Activated CD4-positive, alpha-beta T cell treated with anti-CD3 and anti-CD28 coated beads for 36 hours (primary cell): ENCODE measurements at regions of chr13 and their contacts with region 1.

Region 1: DNA sequence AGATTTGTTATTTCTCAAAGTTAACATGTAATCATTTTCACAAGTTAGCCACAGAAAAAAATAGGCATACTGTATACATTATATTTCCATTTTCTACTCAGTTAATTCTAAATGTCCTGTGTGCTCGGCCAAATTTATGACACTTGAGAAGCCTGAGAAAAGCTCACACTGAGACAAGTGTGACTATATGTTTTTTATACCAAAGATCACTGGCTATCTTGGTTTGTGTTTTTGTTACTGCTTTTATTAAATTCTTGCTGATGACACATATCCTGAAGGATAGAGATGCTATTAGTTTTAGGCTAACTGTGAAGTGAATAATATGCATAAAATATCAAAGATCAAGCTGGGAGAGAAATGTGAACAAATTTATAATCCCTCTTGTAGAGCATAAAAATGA is 49.3 kb upstream of the IL17D start:
- DNase-seq: no peak
- ATAC-seq: no peak
- H3K4me3 Mint-ChIP-seq: no peak overlapping the region
- H3K27ac Mint-ChIP-seq: no peak overlapping the region
- H3K4me1 Mint-ChIP-seq: no peaks in the 10 kb centered on the region
- H3K27me3 Mint-ChIP-seq: no peaks in the 10 kb centered on the region

Region 2: GRCh38 chr13:20305587-20305986 is 348.6 kb before region 1 on chr13:
- CTCF ChIA-PET with region 1: no interaction called
- POLR2A ChIA-PET with region 1: no interaction called
- intact Hi-C with region 1: loop called in 1 of 2 experiments (anchors 5 kb)
- DNase-seq: no peak
- ATAC-seq: no peak
- H3K4me3 Mint-ChIP-seq: no peak overlapping the region
- H3K27ac Mint-ChIP-seq: no peak overlapping the region
- H3K4me1 Mint-ChIP-seq: peaks cover 3% of the 10 kb centered on the region
- H3K27me3 Mint-ChIP-seq: peaks cover 20% of the 10 kb centered on the region

Region 3: DNA sequence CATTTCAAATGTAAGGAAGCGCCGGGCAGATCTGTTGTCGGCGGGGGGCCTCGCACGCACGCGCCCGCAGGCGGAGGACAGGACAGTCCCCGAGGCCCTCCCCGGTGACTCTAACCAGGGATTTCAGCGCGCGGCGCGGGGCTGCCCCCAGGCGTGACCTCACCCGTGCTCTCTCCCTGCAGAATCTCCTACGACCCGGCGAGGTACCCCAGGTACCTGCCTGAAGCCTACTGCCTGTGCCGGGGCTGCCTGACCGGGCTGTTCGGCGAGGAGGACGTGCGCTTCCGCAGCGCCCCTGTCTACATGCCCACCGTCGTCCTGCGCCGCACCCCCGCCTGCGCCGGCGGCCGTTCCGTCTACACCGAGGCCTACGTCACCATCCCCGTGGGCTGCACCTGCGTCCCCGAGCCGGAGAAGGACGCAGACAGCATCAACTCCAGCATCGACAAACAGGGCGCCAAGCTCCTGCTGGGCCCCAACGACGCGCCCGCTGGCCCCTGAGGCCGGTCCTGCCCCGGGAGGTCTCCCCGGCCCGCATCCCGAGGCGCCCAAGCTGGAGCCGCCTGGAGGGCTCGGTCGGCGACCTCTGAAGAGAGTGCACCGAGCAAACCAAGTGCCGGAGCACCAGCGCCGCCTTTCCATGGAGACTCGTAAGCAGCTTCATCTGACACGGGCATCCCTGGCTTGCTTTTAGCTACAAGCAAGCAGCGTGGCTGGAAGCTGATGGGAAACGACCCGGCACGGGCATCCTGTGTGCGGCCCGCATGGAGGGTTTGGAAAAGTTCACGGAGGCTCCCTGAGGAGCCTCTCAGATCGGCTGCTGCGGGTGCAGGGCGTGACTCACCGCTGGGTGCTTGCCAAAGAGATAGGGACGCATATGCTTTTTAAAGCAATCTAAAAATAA is 67.5 kb after region 1 on chr13:
- CTCF ChIA-PET with region 1: no interaction called
- POLR2A ChIA-PET with region 1: no interaction called
- intact Hi-C with region 1: no loop called
- DNase-seq: peak; percentile 54
- ATAC-seq: peak; percentile 55
- H3K4me3 Mint-ChIP-seq: peak overlapping the region; percentile 35
- H3K27ac Mint-ChIP-seq: no peak overlapping the region
- H3K4me1 Mint-ChIP-seq: peaks cover 3% of the 10 kb centered on the region
- H3K27me3 Mint-ChIP-seq: peaks cover 14% of the 10 kb centered on the region